Left cardiac atrium (tissue), 4 donors: ENCODE measurements at regions of chr19 and their contacts with region 1.

Region 1: GRCh38 chr19:12666265-12667048 is at the starts of genes MAN2B1 and WDR83:
- DNase-seq: peak; percentile 82
- ATAC-seq: peak; percentile 85 to 86
- total RNA-seq, gene MAN2B1: 42.1 to 55.8 TPM
- total RNA-seq, gene WDR83: 7.8 to 8.0 TPM

Region 2: DNA sequence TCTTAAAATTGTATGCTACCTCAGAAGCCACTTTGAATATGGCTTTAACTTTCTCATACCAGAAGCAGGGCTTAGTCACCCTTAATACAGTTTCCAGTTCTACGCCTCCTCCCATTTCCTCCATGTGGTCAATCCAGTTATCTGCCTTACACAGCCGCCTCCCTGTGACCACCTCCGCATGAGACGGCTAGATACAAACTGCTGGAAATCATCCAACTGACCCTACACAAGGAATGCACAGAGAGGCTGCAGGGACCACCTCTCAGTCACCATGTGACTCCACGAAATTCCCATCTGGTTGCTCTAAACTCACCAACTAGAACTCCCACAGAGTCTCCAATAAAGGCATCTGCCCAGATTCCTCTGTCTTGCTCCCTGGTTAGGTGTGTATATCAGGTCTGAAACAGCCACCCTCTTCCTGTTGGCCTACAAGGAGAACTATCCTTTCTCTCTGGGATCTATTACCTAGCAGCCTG is 122.0 kb before region 1 on chr19:
- intact Hi-C with region 1: no loop called
- DNase-seq: peak; percentile 33
- ATAC-seq: peak in 1 of 2 donors; percentile 72

Region 3: DNA sequence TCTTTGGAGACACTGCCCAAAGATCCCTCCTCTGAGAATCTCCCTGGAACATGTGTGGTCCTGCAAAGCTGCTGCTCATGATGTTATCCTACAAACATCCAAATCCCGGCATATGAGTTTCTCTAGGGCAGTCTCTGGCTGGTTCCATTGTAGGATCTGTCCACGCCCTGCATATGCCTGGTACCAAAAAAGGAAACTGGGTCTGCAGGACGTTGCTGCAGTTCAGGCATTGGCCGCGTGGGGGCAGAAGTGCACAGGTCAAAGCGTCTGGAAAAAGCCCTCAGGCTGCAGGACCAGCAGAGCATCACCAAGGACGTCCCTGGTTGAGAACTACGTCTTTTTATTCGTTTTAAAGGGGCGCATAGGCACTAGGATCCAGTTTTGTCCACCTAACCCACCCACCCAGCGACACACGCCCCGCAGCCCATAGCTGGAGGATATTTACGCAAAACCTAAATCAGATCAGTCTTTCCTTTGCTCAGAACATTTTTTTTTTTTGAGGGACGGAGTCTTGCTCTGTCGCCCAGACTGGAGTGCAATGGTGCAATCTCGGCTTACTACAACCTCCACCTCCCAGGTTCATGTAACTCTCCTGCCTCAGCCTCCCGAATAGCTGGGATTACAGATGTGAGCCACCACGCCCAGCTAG is 102.3 kb before region 1 on chr19:
- intact Hi-C with region 1: loop called (anchors 5 to 10 kb)
- DNase-seq: peak; percentile 89
- ATAC-seq: peak; percentile 91 to 96